IMR-90 (cell line): ENCODE measurements at regions of chr5 and their contacts with region 1.

Region 1: GRCh38 chr5:10831419-10831818 is 70.4 kb upstream of the DAP start:
- DNase-seq: peak; percentile 95
- ATAC-seq: peak; percentile 96
- H3K4me3 ChIP-seq: no peak overlapping the region
- H3K27ac ChIP-seq: peak overlapping the region; percentile 94
- H3K4me1 ChIP-seq: peaks cover 23% of the 10 kb centered on the region
- H3K27me3 ChIP-seq: no peaks in the 10 kb centered on the region
- CTCF ChIP-seq: no peak
- POLR2A ChIP-seq: peak; percentile 14; the same call in 1 of the 2 replicates
- RAD21 ChIP-seq: 0 out of 2 replicates have a peak, but pooled peaks have one; percentile 11

Region 2: DNA sequence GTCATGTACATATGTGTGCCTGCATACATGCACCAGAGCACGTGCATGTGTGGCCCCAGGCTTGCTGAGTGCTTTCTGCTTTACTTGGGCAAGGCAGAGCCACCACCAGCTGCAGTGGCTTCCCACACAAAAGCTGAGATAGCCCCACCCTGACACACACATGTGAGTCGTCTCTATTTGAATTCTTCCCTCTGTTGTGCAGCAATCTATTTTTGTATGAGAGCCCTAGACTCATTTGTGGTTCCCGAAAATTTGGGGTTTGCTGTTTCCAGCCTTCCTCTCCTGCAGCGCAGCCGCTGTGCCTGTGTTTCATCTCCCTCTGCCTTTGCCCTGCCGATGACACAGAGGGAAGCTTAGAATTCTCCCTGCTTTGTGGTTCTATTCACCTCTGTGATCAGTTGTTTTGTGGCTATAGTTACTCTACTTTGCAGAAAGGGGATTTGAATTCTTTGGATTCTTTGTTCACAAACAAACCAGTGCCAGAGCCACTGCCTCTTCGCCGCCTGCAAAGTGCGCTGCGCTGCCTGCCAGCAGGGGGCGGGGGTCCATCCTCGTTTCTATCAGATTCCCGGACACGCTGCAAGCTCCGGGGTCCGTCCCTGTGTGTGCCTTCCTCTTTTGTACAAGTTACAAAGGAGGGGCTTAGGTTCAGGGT is 25.4 kb after region 1 on chr5:
- CTCF ChIA-PET with region 1: interaction called, 4 read pairs
- POLR2A ChIA-PET with region 1: no interaction called
- dilution Hi-C with region 1: no loop called
- in situ Hi-C with region 1: no loop called
- intact Hi-C with region 1: loop called (anchors 2 kb)
- DNase-seq: peak; percentile 77
- ATAC-seq: peak; percentile 90
- H3K4me3 ChIP-seq: no peak overlapping the region
- H3K27ac ChIP-seq: peak overlapping the region; percentile 1; the same call in 1 of the 2 replicates
- H3K4me1 ChIP-seq: peaks cover 18% of the 10 kb centered on the region
- H3K27me3 ChIP-seq: no peaks in the 10 kb centered on the region
- CTCF ChIP-seq: peak; percentile 85
- POLR2A ChIP-seq: no peak
- RAD21 ChIP-seq: peak; percentile 65